Common myeloid progenitor, CD34-positive (primary cell): ENCODE measurements at regions of chr18 and their contacts with region 1.

Region 1: GRCh38 chr18:74652392-74652988 is 54.8 kb downstream of the ZNF407 start:
- DNase-seq: peak; percentile 42 to 68 (median 64)
- H3K4me3 ChIP-seq: no peak overlapping the region
- H3K27ac ChIP-seq: no peak overlapping the region
- H3K4me1 ChIP-seq: no peaks in the 10 kb centered on the region
- H3K27me3 ChIP-seq: no peaks in the 10 kb centered on the region

Region 2: GRCh38 chr18:75478996-75479880 is 826.7 kb after region 1 on chr18:
- CTCF ChIA-PET with region 1: interaction called, 17 read pairs
- POLR2A ChIA-PET with region 1: no interaction called
- DNase-seq: peak; percentile 46 to 72 (median 67)
- H3K4me3 ChIP-seq: no peak overlapping the region
- H3K27ac ChIP-seq: no peak overlapping the region
- H3K4me1 ChIP-seq: no peaks in the 10 kb centered on the region
- H3K27me3 ChIP-seq: peaks cover 0 to 7% (median 0%) of the 10 kb centered on the region in 5 experiments